ENCODE measurements at regions of chr7 and their contacts with region 1.

Region 1: DNA sequence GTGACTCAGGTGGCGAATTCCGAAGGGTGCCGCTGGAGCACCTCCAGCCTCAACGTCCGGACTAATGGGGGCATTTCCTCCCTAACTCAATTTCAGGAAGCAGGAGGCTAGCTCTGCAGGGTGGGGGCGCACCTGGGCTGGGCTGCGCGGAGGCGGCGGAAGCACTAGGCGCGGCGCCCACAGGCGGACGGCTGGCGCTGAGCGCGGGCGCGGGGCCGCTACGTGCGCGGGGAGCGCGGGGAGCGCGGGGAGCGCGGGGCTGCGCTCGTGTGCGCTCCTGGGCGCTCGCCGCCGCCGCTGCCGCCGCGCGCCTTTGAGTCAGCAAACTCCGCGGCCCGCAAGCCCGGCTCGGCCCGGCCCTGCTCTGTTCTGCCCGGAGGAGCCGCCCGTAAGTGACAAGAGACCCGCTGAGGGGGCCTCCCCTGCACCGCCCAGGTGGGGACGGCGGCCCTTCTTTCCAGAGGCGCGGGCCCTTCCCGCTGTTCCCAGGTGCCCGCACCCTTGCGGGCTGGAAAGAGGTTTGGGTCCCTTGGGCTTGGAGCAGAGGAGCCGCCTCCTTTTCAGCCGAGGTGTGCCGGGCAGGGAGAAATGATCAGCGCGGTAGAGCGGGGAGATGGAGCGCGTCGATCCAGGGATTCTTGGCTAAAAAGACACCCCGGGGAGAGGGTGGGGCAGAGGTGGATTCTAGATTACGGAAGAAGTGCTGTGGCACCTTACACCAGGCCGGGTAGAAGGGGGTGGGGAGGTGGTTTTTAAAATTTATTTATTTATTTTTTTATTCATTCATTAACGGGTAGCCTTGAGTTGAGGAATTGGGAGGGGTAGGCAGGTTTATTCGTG is at the start of gene SNX10:
- DNase-seq: peak; percentile 67
- H3K4me3 Mint-ChIP-seq: peak within 1 kb of the TSS; percentile 99
- H3K27ac Mint-ChIP-seq: peak within 1 kb of the TSS; percentile 95
- H3K4me1 Mint-ChIP-seq: peaks cover 37% of the 10 kb centered on the region
- H3K27me3 Mint-ChIP-seq: peaks cover 4% of the 10 kb centered on the region
- total RNA-seq, gene SNX10: 54.9 and 59.3 TPM in 2 replicates

Region 2: GRCh38 chr7:25857376-25857921 is 434.5 kb before region 1 on chr7:
- intact Hi-C with region 1: loop called (anchors 2 kb)
- DNase-seq: no peak
- H3K4me3 Mint-ChIP-seq: no peak overlapping the region
- H3K27ac Mint-ChIP-seq: no peak overlapping the region
- H3K4me1 Mint-ChIP-seq: peaks cover 48% of the 10 kb centered on the region
- H3K27me3 Mint-ChIP-seq: peaks cover 27% of the 10 kb centered on the region

Region 3: DNA sequence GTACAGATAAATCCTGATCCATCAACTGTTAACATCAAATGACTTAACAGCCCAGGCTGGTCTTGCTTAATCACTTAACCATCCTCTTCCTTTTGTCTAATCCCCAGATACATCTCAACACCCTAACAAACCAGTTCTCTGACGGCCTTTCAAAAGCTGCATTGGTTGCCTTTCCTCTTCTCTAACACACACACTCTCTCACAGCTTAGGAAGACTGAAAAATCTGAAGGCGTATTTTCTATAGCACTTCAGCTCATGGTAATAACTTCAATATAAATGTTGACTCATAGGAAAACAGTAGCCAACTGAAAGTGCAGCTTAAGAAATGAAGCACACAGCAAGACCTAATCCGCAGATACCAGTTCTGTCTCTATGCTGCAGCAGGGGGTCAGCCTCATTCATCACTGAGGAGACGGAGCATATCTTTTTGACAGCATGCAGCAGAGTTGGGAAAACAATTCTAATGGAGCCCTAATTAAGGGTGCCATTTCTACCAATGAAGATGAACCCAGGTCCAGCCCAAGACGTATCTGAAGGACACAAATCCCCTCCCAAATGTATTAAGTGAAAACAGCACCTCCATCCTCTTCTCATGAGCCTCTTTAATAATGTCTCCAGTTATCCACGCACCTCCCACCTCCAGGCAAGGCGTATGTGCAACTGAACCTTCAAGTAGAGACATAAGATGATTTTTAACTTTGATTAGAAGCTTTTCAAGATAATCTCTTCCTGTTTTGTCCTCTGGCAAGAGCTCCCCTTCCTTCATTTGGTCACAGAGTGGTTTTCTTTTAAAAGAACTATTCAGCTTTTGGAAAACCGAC is 351.6 kb before region 1 on chr7:
- intact Hi-C with region 1: loop called (anchors 5 kb)
- DNase-seq: no peak
- H3K4me3 Mint-ChIP-seq: peak overlapping the region; percentile 52
- H3K27ac Mint-ChIP-seq: peak overlapping the region; percentile 90
- H3K4me1 Mint-ChIP-seq: peaks cover 17% of the 10 kb centered on the region
- H3K27me3 Mint-ChIP-seq: peaks cover 16% of the 10 kb centered on the region

Region 4: DNA sequence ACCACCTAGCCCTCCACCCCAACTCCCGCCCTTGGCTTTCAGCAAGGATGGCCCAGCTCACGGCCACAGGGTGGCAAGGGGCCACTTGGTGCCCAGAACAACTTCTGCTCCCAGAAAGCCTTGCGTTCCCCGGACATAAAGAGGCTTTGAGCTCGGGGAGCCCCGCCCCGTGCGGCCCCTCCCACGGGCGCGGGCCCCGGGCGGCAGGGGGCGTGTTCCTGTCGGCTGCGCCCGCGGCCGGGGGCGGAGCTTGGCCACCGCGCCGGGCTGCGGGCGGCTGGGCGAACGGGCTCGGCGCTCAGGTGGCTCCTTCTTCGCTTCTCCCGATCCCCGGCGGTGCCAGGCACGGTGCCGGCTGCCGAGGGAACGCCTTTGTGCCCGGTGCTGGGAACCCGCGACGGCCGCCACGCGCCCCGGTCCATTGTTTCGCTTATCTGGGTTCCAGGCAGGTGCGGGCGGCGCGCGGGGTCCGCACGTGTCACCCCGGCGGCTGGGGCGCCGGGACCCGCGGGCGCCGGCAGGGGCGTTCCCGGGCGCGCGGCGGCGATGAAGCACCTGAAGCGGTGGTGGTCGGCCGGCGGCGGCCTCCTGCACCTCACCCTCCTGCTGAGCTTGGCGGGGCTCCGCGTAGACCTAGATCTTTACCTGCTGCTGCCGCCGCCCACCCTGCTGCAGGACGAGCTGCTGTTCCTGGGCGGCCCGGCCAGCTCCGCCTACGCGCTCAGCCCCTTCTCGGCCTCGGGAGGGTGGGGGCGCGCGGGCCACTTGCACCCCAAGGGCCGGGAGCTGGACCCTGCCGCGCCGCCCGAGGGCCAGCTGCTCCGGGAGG is 139.8 kb before region 1 on chr7 and contains the start of gene NFE2L3:
- intact Hi-C with region 1: loop called (anchors 1 kb)
- DNase-seq: peak; percentile 82
- H3K4me3 Mint-ChIP-seq: peak within 1 kb of the TSS; percentile 99
- H3K27ac Mint-ChIP-seq: peak within 1 kb of the TSS; percentile 97
- H3K4me1 Mint-ChIP-seq: peaks cover 56% of the 10 kb centered on the region
- H3K27me3 Mint-ChIP-seq: no peaks in the 10 kb centered on the region
- total RNA-seq, gene NFE2L3: 42.3 and 44.6 TPM in 2 replicates

Region 5: GRCh38 chr7:26224359-26224758 is 67.6 kb before region 1 on chr7:
- intact Hi-C with region 1: no loop called
- DNase-seq: no peak
- H3K4me3 Mint-ChIP-seq: no peak overlapping the region
- H3K27ac Mint-ChIP-seq: no peak overlapping the region
- H3K4me1 Mint-ChIP-seq: no peaks in the 10 kb centered on the region
- H3K27me3 Mint-ChIP-seq: peaks cover 29% of the 10 kb centered on the region

Region 6: DNA sequence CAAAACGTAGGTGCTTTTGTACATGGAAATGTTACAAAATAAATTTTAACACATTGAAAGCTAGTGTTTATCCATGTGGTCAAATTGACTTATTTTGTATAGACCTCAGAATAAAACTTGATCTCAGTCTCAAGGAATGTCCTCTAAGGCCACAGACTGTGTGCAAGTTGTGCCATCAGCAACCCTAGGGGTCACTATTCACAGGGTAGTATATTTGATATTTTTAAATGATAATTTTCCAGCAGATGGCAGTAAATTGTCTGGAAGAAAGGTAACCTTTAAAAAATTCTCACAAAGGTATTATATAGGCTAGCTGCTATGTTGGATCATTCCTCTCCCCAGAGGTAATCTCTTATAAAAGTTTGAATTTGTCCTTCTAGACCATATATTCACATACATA is 13.1 kb before region 1 on chr7:
- intact Hi-C with region 1: loop called (anchors 1 kb)
- DNase-seq: no peak
- H3K4me3 Mint-ChIP-seq: no peak overlapping the region
- H3K27ac Mint-ChIP-seq: no peak overlapping the region
- H3K4me1 Mint-ChIP-seq: peaks cover 16% of the 10 kb centered on the region
- H3K27me3 Mint-ChIP-seq: no peaks in the 10 kb centered on the region

Region 7: GRCh38 chr7:26321435-26321834 is 29.5 kb after region 1 on chr7:
- intact Hi-C with region 1: no loop called
- DNase-seq: no peak
- H3K4me3 Mint-ChIP-seq: no peak overlapping the region
- H3K27ac Mint-ChIP-seq: no peak overlapping the region
- H3K4me1 Mint-ChIP-seq: peaks cover 12% of the 10 kb centered on the region
- H3K27me3 Mint-ChIP-seq: no peaks in the 10 kb centered on the region

Region 8: DNA sequence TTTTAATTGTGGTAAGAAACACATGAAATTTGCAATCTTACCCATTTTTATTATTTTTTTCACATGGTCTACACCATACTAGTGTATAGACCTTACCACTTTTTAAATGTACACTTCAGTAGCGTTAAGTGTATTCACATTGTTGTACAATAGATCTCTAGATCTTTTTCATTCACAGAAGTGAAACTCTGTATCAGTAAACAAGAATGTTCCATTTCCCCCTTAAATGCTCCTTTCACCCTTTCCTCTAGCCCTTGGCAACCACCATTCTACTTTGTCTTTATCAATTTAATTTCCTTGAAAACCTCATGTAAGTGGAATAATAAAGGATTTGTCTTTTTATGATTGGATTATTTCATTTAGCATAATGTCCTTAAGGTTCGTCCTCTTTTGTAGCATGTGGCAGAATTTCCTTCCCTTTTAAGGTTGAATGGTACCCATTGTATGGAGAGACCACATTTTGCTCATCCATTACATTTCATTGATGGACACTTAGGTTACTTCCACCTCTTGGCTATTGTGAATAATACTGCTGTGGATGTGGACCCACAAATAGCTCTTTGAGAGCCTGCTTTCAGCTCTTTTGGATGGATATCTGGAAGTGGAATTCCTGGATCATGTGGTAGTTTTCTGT is 45.4 kb after region 1 on chr7:
- intact Hi-C with region 1: loop called (anchors 1 kb)
- DNase-seq: no peak
- H3K4me3 Mint-ChIP-seq: no peak overlapping the region
- H3K27ac Mint-ChIP-seq: no peak overlapping the region
- H3K4me1 Mint-ChIP-seq: peaks cover 39% of the 10 kb centered on the region
- H3K27me3 Mint-ChIP-seq: no peaks in the 10 kb centered on the region

Region 9: GRCh38 chr7:27095897-27096767 is 804.2 kb after region 1 on chr7 and contains the start of gene HOXA1:
- intact Hi-C with region 1: loop called (anchors 2 kb)
- DNase-seq: peak; percentile 66
- H3K4me3 Mint-ChIP-seq: peak within 1 kb of the TSS; percentile 80
- H3K27ac Mint-ChIP-seq: peak within 1 kb of the TSS; percentile 21
- H3K4me1 Mint-ChIP-seq: peaks cover 16% of the 10 kb centered on the region
- H3K27me3 Mint-ChIP-seq: peaks cover 83% of the 10 kb centered on the region
- total RNA-seq, gene HOXA1: 0.11 and 0.16 TPM in 2 replicates

Measured in activated T-helper 2 cell treated with anti-CD3 and anti-CD28 coated beads, Interferon-gamma antibody, Interleukin-2, Interleukin-4, amounts not matched to agents 10 μg/mL and 5 μg/mL and 100 μg/mL, durations not matched to agents 14 hours and 24 hours and 36 hours (primary cell).